ENCODE measurements at regions of chr13 and their contacts with region 1.

Region 1: DNA sequence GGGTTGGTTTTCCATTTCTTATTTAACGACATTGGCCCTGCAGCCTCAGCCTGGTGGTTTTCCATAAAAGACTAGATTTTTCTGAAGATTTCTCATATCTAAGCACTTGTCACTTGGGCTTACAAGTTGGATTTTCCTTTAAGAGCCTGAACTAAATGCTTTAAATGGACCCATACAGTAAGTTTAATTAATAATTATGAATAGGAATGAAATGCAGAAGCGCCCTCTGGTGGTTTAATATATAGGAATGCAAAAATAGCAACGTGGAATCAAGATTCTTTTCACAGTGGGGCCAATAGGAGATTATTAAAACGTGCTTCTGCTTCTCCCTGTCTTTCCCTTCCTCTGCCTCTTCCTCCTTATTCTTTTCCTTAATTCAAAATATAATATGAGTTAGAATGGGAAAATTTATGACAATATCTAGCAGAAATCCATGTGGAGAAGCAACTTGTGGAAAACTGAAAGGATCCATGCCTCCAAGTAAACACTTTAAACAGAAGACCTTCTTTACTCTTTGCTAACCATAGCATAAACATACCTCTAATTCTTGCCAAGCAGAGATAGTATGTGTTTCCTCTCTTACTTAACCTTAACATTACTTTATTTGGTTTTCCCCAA is 324.0 kb downstream of the GPC5 start:
- H3K4me3 Mint-ChIP-seq: no peak overlapping the region
- H3K27ac Mint-ChIP-seq: no peak overlapping the region
- H3K4me1 Mint-ChIP-seq: no peaks in the 10 kb centered on the region
- H3K27me3 Mint-ChIP-seq: no peaks in the 10 kb centered on the region

Region 2: DNA sequence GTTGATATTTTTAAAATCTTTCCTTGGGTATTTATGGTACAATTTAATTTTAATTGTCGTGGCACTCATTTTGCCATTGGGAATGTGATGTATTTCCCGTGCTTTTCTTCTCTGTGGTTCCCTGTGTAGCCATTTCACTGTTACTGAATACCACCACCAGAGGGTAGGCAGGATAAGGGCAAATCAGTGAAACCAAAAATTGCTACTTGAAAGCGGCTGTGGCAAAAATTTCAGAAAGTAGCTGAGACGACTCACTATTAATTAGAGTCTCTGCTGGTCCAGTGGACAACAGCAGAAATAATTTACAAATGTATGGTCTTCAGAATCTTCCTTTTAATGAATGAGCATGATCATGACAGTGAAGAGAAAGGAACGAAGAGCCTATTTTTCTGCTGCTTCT is 409.3 kb before region 1 on chr13:
- intact Hi-C with region 1: loop called (anchors 5 kb)
- H3K4me3 Mint-ChIP-seq: no peak overlapping the region
- H3K27ac Mint-ChIP-seq: no peak overlapping the region
- H3K4me1 Mint-ChIP-seq: no peaks in the 10 kb centered on the region
- H3K27me3 Mint-ChIP-seq: peaks cover 9% of the 10 kb centered on the region

Region 3: GRCh38 chr13:91381371-91381770 is 341.0 kb before region 1 on chr13:
- intact Hi-C with region 1: loop called (anchors 5 kb)
- H3K4me3 Mint-ChIP-seq: no peak overlapping the region
- H3K27ac Mint-ChIP-seq: no peak overlapping the region
- H3K4me1 Mint-ChIP-seq: peaks cover 5% of the 10 kb centered on the region
- H3K27me3 Mint-ChIP-seq: no peaks in the 10 kb centered on the region

Region 4: GRCh38 chr13:91506759-91507158 is 215.6 kb before region 1 on chr13:
- intact Hi-C with region 1: no loop called
- H3K4me3 Mint-ChIP-seq: no peak overlapping the region
- H3K27ac Mint-ChIP-seq: no peak overlapping the region
- H3K4me1 Mint-ChIP-seq: no peaks in the 10 kb centered on the region
- H3K27me3 Mint-ChIP-seq: no peaks in the 10 kb centered on the region

Measured in dendritic cell treated with granulocyte-macrophage colony-stimulating factor and Interleukin-4, amounts not matched to agents 40 ng/mL and 50 ng/mL, for 4 days (primary cell).